ENCODE measurements at regions of chr17 and their contacts with region 1.

Region 1: GRCh38 chr17:69733171-69734012 is 318.9 kb downstream of the MAP2K6 start:
- DNase-seq: peak in 1 of 2 experiments; percentile 44
- H3K4me3 ChIP-seq: no peak overlapping the region
- H3K27ac ChIP-seq: no peak overlapping the region
- H3K4me1 ChIP-seq: peaks cover 13% of the 10 kb centered on the region; the same call in 1 of the 2 replicates
- H3K27me3 ChIP-seq: no peaks in the 10 kb centered on the region
- CTCF ChIP-seq: no peak

Region 2: GRCh38 chr17:69327060-69327831 is 406.1 kb before region 1 on chr17 and contains the start of gene ABCA5:
- CTCF ChIA-PET with region 1: no interaction called
- POLR2A ChIA-PET with region 1: interaction called, 11 read pairs
- intact Hi-C with region 1: no loop called
- DNase-seq: peak; percentile 83 to 91
- H3K4me3 ChIP-seq: peak within 1 kb of the TSS; percentile 81
- H3K27ac ChIP-seq: no peak within 1 kb of the TSS
- H3K4me1 ChIP-seq: peaks cover 16% of the 10 kb centered on the region
- H3K27me3 ChIP-seq: no peaks in the 10 kb centered on the region
- CTCF ChIP-seq: no peak
- total RNA-seq, gene ABCA5: 2.9 and 3.8 TPM in 2 replicates